ENCODE measurements at regions of chr11 and their contacts with region 1.

Region 1: DNA sequence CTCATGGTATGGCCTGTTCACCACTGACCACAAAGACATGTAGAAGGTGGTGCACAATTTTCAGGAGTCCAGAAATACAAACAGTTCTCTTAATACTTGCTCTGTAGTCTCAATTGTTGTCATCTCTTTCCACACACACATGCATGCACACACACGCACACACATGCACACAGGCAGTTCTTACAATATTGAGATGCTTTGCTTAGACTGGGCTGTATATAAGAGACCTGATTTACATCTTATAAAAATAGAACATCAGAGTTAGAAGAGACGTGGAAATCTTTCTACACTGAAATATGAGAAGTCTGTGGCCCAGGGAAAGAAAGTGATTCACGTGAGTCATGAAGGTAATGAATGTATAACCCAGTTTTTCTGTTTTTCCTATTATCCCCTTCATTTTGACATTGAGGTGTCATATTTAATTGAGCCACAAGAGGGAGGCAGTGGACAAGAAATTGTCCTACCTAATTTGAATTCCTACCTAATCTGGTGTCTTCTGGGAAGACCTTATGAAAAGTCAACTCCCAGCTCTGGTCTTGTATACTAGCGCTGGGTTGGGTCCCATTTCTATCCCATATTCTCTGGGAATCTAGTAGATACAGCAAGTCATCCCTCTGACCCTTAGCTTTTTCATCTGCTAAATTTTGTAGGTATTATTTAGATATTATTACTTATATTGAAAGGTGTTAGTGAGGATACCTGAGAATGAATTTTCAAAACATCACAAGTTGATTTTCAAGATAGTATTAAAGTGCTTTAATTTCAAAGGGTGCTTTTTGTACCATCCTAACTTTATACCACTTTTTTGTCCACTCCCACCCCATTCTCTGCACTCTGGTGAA is 14.9 kb upstream of the MS4A4A start:
- DNase-seq: peak; percentile 8
- ATAC-seq: peak; percentile 25; the same call in 1 of the 3 replicates
- H3K4me3 ChIP-seq: no peak overlapping the region
- H3K27ac ChIP-seq: no peak overlapping the region
- H3K4me1 ChIP-seq: no peaks in the 10 kb centered on the region
- H3K27me3 ChIP-seq: peaks cover 0 to 4% of the 10 kb centered on the region in 2 experiments; a peak in 2 of 5 replicates
- CTCF ChIP-seq: peak; percentile 69
- EP300 ChIP-seq: no peak
- POLR2A ChIP-seq: no peak
- RAD21 ChIP-seq: peak; percentile 26; the same call in 1 of the 2 replicates

Region 2: GRCh38 chr11:60334005-60334620 is 68.5 kb after region 1 on chr11:
- CTCF ChIA-PET with region 1: no interaction called
- POLR2A ChIA-PET with region 1: no interaction called
- in situ Hi-C with region 1: no loop called
- intact Hi-C with region 1: loop called (anchors 2 kb)
- DNase-seq: peak; percentile 42
- ATAC-seq: peak; percentile 88
- H3K4me3 ChIP-seq: no peak overlapping the region
- H3K27ac ChIP-seq: no peak overlapping the region
- H3K4me1 ChIP-seq: no peaks in the 10 kb centered on the region
- H3K27me3 ChIP-seq: no peaks in the 10 kb centered on the region
- CTCF ChIP-seq: peak; percentile 57
- EP300 ChIP-seq: no peak
- POLR2A ChIP-seq: no peak
- RAD21 ChIP-seq: 0 out of 2 replicates have a peak, but pooled peaks have one; percentile 22

Region 3: DNA sequence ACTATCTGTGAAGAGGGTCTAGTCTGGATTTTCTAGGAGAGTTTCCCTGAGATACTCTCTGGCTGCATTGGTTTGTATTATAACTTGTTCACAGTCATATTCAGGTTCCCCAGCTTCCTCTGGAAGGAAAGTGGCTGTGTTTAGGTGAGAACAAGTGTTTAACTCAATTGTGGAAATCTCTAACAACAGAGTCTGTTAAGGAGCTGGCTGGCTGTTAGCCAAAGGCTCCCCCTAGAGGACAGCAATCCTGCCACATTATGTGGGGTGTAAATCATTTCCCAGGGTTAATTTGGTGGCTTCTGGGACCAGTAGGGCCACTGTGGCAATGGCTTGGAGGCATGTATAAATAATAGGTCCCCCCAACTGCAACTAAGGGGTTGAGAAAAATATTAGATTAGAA is 79.9 kb after region 1 on chr11:
- CTCF ChIA-PET with region 1: no interaction called
- POLR2A ChIA-PET with region 1: no interaction called
- in situ Hi-C with region 1: no loop called
- intact Hi-C with region 1: loop called (anchors 5 kb)
- DNase-seq: peak; percentile 8
- ATAC-seq: peak; percentile 74
- H3K4me3 ChIP-seq: no peak overlapping the region
- H3K27ac ChIP-seq: no peak overlapping the region
- H3K4me1 ChIP-seq: no peaks in the 10 kb centered on the region
- H3K27me3 ChIP-seq: peaks cover 0 to 6% of the 10 kb centered on the region in 2 experiments; a peak in 1 of 5 replicates
- CTCF ChIP-seq: peak; percentile 38; the same call in 1 of the 2 replicates
- EP300 ChIP-seq: no peak
- POLR2A ChIP-seq: no peak
- RAD21 ChIP-seq: no peak

Region 4: GRCh38 chr11:60485986-60486385 is 220.4 kb after region 1 on chr11:
- CTCF ChIA-PET with region 1: no interaction called
- POLR2A ChIA-PET with region 1: no interaction called
- in situ Hi-C with region 1: no loop called
- intact Hi-C with region 1: loop called (anchors 2 kb)
- DNase-seq: peak; percentile 54
- ATAC-seq: peak; percentile 100
- H3K4me3 ChIP-seq: no peak overlapping the region
- H3K27ac ChIP-seq: no peak overlapping the region
- H3K4me1 ChIP-seq: no peaks in the 10 kb centered on the region
- H3K27me3 ChIP-seq: no peaks in the 10 kb centered on the region
- CTCF ChIP-seq: peak; percentile 66
- EP300 ChIP-seq: no peak
- POLR2A ChIP-seq: no peak
- RAD21 ChIP-seq: no peak

Region 5: GRCh38 chr11:60607483-60607882 is 341.9 kb after region 1 on chr11:
- CTCF ChIA-PET with region 1: no interaction called
- POLR2A ChIA-PET with region 1: no interaction called
- in situ Hi-C with region 1: loop called (anchors 25 kb)
- intact Hi-C with region 1: no loop called
- DNase-seq: no peak
- ATAC-seq: no peak
- H3K4me3 ChIP-seq: no peak overlapping the region
- H3K27ac ChIP-seq: no peak overlapping the region
- H3K4me1 ChIP-seq: no peaks in the 10 kb centered on the region
- H3K27me3 ChIP-seq: no peaks in the 10 kb centered on the region
- CTCF ChIP-seq: no peak
- EP300 ChIP-seq: no peak
- POLR2A ChIP-seq: no peak
- RAD21 ChIP-seq: no peak

Region 6: DNA sequence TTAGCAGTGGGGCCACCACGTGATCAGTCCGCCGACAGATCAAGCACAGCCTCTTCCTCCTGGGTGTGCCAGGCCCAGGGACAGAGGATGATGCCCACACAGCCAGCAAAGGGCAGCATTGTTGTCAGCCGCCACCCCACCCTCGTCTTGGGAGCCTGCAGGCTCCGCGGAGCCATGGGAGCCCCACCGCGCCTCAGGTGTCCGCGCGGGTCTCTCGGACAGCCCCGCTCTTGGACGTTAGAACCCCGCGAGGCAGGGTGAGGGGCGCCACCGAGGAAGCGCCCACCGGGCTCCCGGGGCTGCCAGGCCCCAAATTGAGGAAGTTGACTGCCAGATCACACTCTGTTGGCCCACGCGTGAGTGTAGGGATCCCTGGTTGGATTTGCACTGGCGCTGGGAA is 349.9 kb after region 1 on chr11:
- CTCF ChIA-PET with region 1: no interaction called
- POLR2A ChIA-PET with region 1: no interaction called
- in situ Hi-C with region 1: loop called (anchors 25 kb)
- intact Hi-C with region 1: loop called (anchors 1 kb)
- DNase-seq: no peak
- ATAC-seq: no peak
- H3K4me3 ChIP-seq: no peak overlapping the region
- H3K27ac ChIP-seq: no peak overlapping the region
- H3K4me1 ChIP-seq: no peaks in the 10 kb centered on the region
- H3K27me3 ChIP-seq: peaks cover 0 to 2% of the 10 kb centered on the region in 2 experiments; a peak in 2 of 5 replicates
- CTCF ChIP-seq: no peak
- EP300 ChIP-seq: no peak
- POLR2A ChIP-seq: no peak
- RAD21 ChIP-seq: no peak